Activated naive CD8-positive, alpha-beta T cell treated with anti-CD3 and anti-CD28 coated beads, Interleukin-2, amount 10 ng/mL, durations not matched to agents 7 days and 5 days (primary cell): ENCODE measurements at regions of chr16 and their contacts with region 1.

Region 1: GRCh38 chr16:3282730-3283524 is at the start of gene ZNF263:
- DNase-seq: peak; percentile 96
- ATAC-seq: peak; percentile 88
- H3K4me3 Mint-ChIP-seq: peak within 1 kb of the TSS; percentile 95
- H3K27ac Mint-ChIP-seq: peak within 1 kb of the TSS; percentile 89
- H3K4me1 Mint-ChIP-seq: peaks cover 23% of the 10 kb centered on the region
- H3K27me3 Mint-ChIP-seq: peaks cover 3% of the 10 kb centered on the region
- total RNA-seq, gene ZNF263: 34.7 to 36.7 TPM

Region 2: GRCh38 chr16:3144321-3144983 is 138.5 kb before region 1 on chr16:
- POLR2A ChIA-PET with region 1: no interaction called
- DNase-seq: no peak
- ATAC-seq: no peak
- H3K4me3 Mint-ChIP-seq: no peak overlapping the region
- H3K27ac Mint-ChIP-seq: no peak overlapping the region
- H3K4me1 Mint-ChIP-seq: peaks cover 2% of the 10 kb centered on the region
- H3K27me3 Mint-ChIP-seq: no peaks in the 10 kb centered on the region

Region 3: DNA sequence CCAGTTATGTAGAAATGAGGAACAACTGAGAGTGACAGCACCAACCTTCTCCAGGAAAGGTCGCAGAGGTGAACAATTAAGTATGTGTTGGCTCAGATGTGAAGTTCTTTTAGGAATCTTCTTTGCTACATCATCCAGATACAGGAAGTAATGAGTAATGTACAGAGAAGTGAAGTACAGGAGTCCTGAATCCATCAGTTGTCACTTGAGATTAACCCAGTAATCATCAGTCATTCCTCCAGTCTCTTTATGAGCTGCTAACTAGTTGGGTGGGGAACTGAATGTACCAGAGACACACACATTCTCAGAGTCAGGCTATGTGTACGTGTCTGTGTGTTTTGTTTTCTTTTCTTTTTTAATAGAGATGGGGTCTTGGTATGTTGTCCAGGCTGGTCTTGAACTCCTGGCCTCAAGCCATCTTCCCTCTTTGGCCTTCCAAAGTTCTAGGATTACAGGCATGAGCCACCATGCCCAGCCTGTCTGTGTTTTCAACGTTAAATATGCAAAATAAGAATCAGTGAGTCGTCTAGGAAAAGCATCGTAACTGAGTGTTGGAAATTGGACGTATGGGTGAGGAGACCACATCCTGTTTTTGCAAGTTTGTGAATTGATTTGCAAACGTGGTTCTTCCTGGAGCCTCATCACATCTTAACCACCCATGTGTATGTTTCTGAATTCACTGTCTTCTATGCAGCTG is 67.9 kb before region 1 on chr16:
- POLR2A ChIA-PET with region 1: interaction called, 12 read pairs
- DNase-seq: no peak
- ATAC-seq: peak; percentile 89
- H3K4me3 Mint-ChIP-seq: peak overlapping the region; percentile 67
- H3K27ac Mint-ChIP-seq: peak overlapping the region; percentile 97
- H3K4me1 Mint-ChIP-seq: peaks cover 28% of the 10 kb centered on the region
- H3K27me3 Mint-ChIP-seq: no peaks in the 10 kb centered on the region

Region 4: DNA sequence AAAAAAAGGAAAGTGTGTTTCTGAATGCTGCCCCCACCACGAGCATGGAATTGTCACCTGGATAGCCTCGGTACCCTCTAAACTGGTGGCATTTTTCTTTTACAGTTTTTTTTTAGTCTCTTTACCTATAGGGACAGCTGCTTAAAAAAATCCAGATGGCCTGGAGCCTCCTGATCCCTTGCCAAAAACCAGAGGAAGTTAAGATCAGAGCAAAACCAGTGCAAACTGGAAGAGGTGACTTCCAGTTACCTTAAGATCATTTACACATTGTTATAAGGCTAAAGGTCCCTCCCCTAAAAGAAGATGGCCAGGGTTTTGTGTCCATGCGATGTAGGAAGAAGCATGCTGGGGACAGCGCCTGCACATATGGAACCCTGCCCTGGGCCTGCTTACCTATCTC is 30.0 kb before region 1 on chr16:
- POLR2A ChIA-PET with region 1: no interaction called
- DNase-seq: no peak
- ATAC-seq: no peak
- H3K4me3 Mint-ChIP-seq: no peak overlapping the region
- H3K27ac Mint-ChIP-seq: no peak overlapping the region
- H3K4me1 Mint-ChIP-seq: no peaks in the 10 kb centered on the region
- H3K27me3 Mint-ChIP-seq: peaks cover 3% of the 10 kb centered on the region

Region 5: GRCh38 chr16:3264137-3265036 is 18.5 kb before region 1 on chr16:
- POLR2A ChIA-PET with region 1: interaction called, 38 read pairs
- DNase-seq: peak; percentile 96
- ATAC-seq: peak; percentile 90
- H3K4me3 Mint-ChIP-seq: peak overlapping the region; percentile 94
- H3K27ac Mint-ChIP-seq: peak overlapping the region; percentile 96
- H3K4me1 Mint-ChIP-seq: peaks cover 22% of the 10 kb centered on the region
- H3K27me3 Mint-ChIP-seq: no peaks in the 10 kb centered on the region

Region 6: GRCh38 chr16:3305109-3306068 is 22.5 kb after region 1 on chr16 and contains the starts of genes TIGD7 and ZNF75A:
- POLR2A ChIA-PET with region 1: interaction called, 31 read pairs
- DNase-seq: peak; percentile 90
- ATAC-seq: peak; percentile 95
- H3K4me3 Mint-ChIP-seq: peak within 1 kb of the TSS; percentile 81
- H3K27ac Mint-ChIP-seq: peak within 1 kb of the TSS; percentile 88
- H3K4me1 Mint-ChIP-seq: peaks cover 16% of the 10 kb centered on the region
- H3K27me3 Mint-ChIP-seq: no peaks in the 10 kb centered on the region
- total RNA-seq, gene TIGD7: 10.3 to 12.1 TPM
- total RNA-seq, gene ZNF75A: 63.6 to 63.8 TPM

Region 7: GRCh38 chr16:3328643-3329042 is 45.7 kb after region 1 on chr16:
- POLR2A ChIA-PET with region 1: no interaction called
- DNase-seq: no peak
- ATAC-seq: no peak
- H3K4me3 Mint-ChIP-seq: no peak overlapping the region
- H3K27ac Mint-ChIP-seq: no peak overlapping the region
- H3K4me1 Mint-ChIP-seq: no peaks in the 10 kb centered on the region
- H3K27me3 Mint-ChIP-seq: peaks cover 3% of the 10 kb centered on the region

Region 8: DNA sequence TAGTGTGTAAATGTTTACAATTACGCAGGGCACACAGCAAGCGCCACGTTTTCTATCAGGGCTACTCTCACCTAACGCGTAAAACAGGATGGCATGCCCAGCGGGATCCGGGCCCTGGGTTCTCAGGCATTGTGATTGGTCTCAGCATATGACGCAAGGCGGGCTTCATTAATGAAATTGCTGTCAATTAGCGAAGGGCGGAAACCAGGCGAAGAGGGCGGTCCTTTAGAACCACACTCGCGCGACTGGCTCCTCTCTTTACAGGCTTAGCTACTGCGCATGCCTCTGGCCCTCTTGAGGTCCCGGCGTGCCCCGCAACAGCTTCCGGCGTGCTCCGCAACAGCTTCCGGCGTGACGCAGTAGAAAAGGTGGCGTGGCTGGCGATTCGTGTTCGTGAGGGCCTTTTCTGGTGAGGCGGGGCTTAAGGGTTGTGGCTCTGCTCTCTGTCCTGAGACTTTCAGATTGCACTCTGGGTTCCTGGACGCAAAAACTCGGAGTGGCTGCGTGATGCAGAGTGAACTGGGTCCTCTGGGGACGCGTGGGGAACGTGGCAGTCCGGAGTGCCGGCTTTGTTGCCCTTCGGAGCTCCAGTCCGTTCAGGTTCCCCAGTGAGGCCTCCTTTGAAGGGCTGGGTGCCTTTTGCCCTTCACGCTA is 82.0 kb after region 1 on chr16:
- POLR2A ChIA-PET with region 1: interaction called, 10 read pairs
- DNase-seq: peak; percentile 87
- ATAC-seq: peak; percentile 97
- H3K4me3 Mint-ChIP-seq: peak overlapping the region; percentile 82
- H3K27ac Mint-ChIP-seq: peak overlapping the region; percentile 89
- H3K4me1 Mint-ChIP-seq: peaks cover 9% of the 10 kb centered on the region
- H3K27me3 Mint-ChIP-seq: peaks cover 4% of the 10 kb centered on the region

Region 9: GRCh38 chr16:3457434-3458252 is 174.7 kb after region 1 on chr16:
- POLR2A ChIA-PET with region 1: interaction called, 11 read pairs
- DNase-seq: peak; percentile 98
- ATAC-seq: peak; percentile 88
- H3K4me3 Mint-ChIP-seq: peak overlapping the region; percentile 84
- H3K27ac Mint-ChIP-seq: peak overlapping the region; percentile 87
- H3K4me1 Mint-ChIP-seq: peaks cover 39% of the 10 kb centered on the region
- H3K27me3 Mint-ChIP-seq: no peaks in the 10 kb centered on the region